ENCODE measurements at regions of chr9 and their contacts with region 1.

Region 1: DNA sequence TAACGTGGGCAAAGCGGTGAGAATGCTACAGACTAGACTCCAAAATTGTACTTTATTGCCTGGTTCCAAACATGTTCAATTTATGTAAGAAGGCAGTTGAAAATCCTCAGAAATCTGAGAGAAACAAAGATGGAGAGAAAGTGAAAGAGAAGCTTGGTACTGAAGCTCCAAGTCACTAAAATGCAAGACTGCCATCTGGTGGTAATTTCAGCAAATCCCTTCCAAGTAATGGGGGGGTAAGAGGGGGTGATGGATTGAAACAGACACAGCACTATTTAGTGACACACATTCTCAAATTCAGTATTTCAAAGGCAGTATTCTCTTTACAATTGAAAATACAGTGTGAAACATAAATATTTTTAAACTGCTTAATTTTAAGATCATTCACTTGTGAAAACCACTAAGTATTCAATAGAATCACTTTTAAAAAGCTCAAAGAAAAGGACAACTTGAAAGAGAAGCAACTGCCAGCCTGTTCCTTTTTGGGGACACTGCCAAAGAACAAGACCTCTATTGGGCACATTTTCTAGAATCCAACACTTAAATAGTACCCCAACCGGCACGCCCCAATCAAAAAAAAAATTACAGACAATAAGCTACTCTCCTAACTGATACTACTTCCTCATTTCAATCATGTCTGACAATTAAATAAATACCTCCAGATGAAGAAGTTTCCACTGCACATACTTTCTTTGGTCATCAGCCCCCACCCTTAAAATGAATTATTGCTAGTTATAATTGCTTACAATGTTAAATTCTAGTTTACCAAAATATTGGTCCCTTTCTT is 131.5 kb downstream of the AGTPBP1 start:
- DNase-seq: peak; percentile 74
- CTCF ChIP-seq: peak; percentile 70

Region 2: DNA sequence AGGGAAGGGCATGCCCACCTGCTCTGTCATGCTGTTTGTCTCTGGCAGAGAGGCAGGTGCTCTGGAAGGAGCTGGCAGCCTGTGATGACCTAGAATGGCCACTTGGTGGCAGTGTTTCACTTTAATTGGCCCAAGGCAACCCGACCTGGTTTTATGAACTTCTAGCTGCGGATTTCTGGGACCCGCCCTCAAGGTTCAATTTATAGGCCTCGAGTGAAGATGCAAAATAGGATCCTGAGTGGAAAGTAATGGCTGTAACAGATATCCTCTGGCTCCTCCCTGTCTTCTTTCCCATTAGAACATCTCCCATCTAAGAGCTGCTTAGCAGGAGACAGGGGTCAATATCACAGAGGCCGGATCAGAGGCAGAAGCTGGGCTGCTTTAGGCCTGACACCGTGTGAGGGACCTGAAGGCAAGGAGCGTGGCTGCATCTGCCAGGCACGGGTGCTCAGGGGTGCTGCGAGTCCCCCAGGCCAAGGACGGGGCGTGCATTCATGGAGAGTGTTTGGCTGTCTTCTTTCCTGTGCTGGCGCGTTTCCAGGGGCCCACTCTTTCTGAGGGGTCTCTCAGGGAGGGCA is 1213.0 kb before region 1 on chr9:
- CTCF ChIA-PET with region 1: interaction called, 19 read pairs
- POLR2A ChIA-PET with region 1: no interaction called
- DNase-seq: peak; percentile 76
- CTCF ChIP-seq: peak; percentile 91

Region 3: DNA sequence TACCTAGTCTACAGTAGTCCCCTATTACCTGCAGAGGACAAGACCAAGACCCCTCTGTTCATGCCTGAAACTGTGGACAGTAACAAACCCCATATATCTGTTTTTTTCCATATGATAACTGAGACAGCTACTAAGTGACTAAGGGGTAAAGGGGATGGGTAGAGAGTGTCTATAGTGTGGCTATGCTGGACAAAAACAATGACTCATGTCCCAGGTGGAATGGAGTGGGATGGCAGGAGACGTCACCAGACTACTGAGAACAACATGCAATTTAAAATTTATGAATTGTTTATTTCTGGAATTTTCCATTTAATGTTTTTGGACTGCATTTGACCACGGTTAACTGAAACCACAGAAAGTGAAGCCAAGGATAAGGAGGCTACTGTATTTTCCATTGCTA is 40.3 kb before region 1 on chr9:
- CTCF ChIA-PET with region 1: interaction called, 12 read pairs
- POLR2A ChIA-PET with region 1: no interaction called
- DNase-seq: no peak
- CTCF ChIP-seq: no peak

Region 4: GRCh38 chr9:85586684-85587083 is 23.6 kb before region 1 on chr9:
- CTCF ChIA-PET with region 1: interaction called, 15 read pairs
- POLR2A ChIA-PET with region 1: no interaction called
- DNase-seq: no peak
- CTCF ChIP-seq: no peak

Region 5: DNA sequence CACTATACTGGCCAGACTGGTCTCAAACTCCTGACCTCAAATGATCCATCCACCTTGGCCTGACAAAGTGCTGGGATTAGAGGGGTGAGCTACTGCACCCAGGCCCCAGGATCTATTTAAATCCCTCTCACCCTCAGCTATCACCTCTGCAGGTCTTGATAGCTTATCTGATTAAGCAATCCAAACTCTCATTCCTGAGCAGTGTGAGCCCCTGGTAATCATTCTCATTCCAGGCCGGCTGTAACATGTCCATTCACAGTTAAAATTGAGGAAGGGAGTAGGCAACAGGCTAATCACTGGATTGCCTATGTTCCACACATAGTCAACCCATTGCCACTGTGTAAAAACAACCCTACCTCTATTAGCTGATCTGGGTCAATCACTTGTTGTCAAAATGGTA is 20.4 kb after region 1 on chr9:
- CTCF ChIA-PET with region 1: interaction called, 15 read pairs
- POLR2A ChIA-PET with region 1: no interaction called
- DNase-seq: no peak
- CTCF ChIP-seq: no peak

Region 6: DNA sequence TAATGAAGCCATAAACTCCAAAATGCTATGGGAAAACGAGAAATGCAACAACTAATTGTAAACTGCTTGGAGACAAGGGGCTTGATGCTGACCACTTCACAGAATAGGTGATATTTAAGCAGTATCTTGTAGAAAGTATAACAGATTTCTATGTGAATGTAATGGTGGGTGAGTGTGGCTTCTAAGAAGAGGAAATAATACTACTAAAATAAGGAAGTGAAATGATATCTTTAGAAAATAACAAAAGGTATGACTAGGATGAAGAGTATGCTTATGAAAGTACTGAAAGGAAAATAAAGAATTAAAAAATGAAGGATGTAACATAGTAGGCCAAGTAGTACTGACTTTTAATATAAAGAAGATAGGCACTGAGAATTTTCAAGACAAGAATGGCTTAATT is 37.3 kb after region 1 on chr9:
- CTCF ChIA-PET with region 1: interaction called, 11 read pairs
- POLR2A ChIA-PET with region 1: no interaction called
- DNase-seq: peak; percentile 35
- CTCF ChIP-seq: no peak

Region 7: GRCh38 chr9:85658716-85659115 is 48.4 kb after region 1 on chr9:
- CTCF ChIA-PET with region 1: interaction called, 13 read pairs
- POLR2A ChIA-PET with region 1: no interaction called
- DNase-seq: no peak
- CTCF ChIP-seq: no peak